Endothelial cell of umbilical vein (primary cell): ENCODE measurements at regions of chr7 and their contacts with region 1.

Region 1: GRCh38 chr7:43582503-43583423 is at the start of gene STK17A:
- DNase-seq: peak; percentile 92
- H3K4me3 ChIP-seq: peak within 1 kb of the TSS; percentile 74 to 89 (median 76)
- H3K27ac ChIP-seq: peak within 1 kb of the TSS; percentile 49
- H3K4me1 ChIP-seq: peaks cover 33% of the 10 kb centered on the region
- H3K27me3 ChIP-seq: peaks cover 2 to 12% of the 10 kb centered on the region in 2 experiments
- CTCF ChIP-seq: peak; percentile 97 to 100
- POLR2A ChIP-seq: peak; percentile 96
- total RNA-seq, gene STK17A: 53.9 and 58.8 TPM in 2 replicates

Region 2: DNA sequence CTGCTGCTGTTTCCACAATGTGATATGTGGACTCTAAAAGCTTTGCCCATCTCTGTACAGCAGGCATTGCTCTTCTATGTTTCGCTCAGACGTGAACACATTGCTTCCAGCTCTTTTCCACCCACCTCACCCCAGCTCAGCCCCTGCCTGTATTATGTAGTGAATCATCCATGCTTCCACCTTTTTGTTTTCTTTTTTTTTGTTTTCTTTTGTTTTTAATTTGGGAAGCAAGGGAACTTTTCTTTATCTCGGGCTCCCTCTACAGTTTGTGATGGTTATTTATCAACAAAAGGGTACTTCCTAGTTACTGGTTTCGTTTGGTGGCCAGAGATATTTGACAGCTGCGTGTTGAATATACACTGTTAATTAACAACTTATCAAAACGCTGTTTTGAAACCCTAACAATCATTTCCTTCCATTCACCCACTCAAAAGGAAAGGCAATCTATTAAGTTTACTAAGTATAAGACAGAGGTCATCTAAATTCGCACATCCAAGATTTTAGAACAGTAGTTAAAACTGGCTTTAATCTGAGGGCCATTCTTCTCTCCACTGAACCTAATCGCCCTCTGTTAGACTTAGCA is 127.7 kb before region 1 on chr7:
- CTCF ChIA-PET with region 1: interaction called, 18 read pairs
- POLR2A ChIA-PET with region 1: interaction called, 5 read pairs
- dilution Hi-C with region 1: no loop called
- intact Hi-C with region 1: no loop called
- DNase-seq: peak; percentile 68
- H3K4me3 ChIP-seq: peak overlapping the region in 1 of 3 experiments; percentile 39
- H3K27ac ChIP-seq: no peak overlapping the region
- H3K4me1 ChIP-seq: peaks cover 3% of the 10 kb centered on the region
- H3K27me3 ChIP-seq: peaks cover 9 to 29% of the 10 kb centered on the region in 2 experiments
- CTCF ChIP-seq: peak; percentile 30 to 50
- POLR2A ChIP-seq: no peak

Region 3: DNA sequence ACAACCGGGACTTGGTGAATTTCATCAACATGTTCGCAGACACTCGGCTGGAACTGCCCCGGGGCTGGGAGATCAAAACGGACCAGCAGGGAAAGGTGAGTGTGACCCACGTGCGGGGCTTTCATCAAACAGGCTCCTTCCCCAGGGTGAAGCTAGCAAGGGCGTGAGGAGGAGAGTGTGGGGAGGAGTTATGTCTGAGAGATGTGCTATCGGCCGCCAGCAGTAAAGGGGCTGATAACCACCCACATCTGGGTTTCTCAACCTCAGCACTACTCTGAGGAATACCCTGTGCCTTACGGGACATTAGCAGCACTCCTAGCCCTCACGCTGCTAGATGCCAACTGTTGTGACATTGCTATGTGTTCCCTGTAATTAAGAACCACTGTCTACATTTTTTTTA is 113.8 kb before region 1 on chr7:
- CTCF ChIA-PET with region 1: no interaction called
- POLR2A ChIA-PET with region 1: no interaction called
- dilution Hi-C with region 1: no loop called
- intact Hi-C with region 1: no loop called
- DNase-seq: no peak
- H3K4me3 ChIP-seq: no peak overlapping the region
- H3K27ac ChIP-seq: no peak overlapping the region
- H3K4me1 ChIP-seq: no peaks in the 10 kb centered on the region
- H3K27me3 ChIP-seq: peaks cover 3 to 6% of the 10 kb centered on the region in 2 experiments
- CTCF ChIP-seq: no peak
- POLR2A ChIP-seq: no peak

Region 4: DNA sequence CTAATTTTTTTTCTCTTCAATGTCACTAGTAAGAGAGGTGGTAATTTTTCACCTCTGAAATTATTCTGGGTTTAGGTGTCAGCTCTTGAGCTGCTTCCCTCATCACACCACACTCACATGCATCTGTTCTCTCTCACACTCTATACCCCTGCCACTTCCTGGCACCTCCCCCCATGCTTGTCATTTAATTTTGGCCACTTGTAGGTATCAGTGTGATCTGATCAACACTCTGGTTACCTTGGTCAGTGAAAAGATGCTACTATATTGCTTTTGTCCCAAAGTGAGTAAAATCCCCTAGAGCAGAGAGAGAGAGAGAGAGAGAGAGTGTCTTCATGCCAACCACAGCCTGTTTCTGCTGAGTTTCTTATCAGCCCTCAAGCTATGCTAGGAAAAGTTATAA is 42.7 kb after region 1 on chr7:
- CTCF ChIA-PET with region 1: interaction called, 28 read pairs
- POLR2A ChIA-PET with region 1: interaction called, 12 read pairs
- dilution Hi-C with region 1: no loop called
- intact Hi-C with region 1: no loop called
- DNase-seq: no peak
- H3K4me3 ChIP-seq: no peak overlapping the region
- H3K27ac ChIP-seq: no peak overlapping the region
- H3K4me1 ChIP-seq: peaks cover 5% of the 10 kb centered on the region
- H3K27me3 ChIP-seq: no peaks in the 10 kb centered on the region
- CTCF ChIP-seq: no peak
- POLR2A ChIP-seq: no peak

Region 5: GRCh38 chr7:43647673-43648472 is 65.1 kb after region 1 on chr7:
- CTCF ChIA-PET with region 1: interaction called, 126 read pairs
- POLR2A ChIA-PET with region 1: interaction called, 50 read pairs
- dilution Hi-C with region 1: no loop called
- intact Hi-C with region 1: loop called (anchors 1 kb)
- DNase-seq: peak; percentile 98
- H3K4me3 ChIP-seq: peak overlapping the region in 1 of 3 experiments; percentile 52
- H3K27ac ChIP-seq: peak overlapping the region; percentile 97
- H3K4me1 ChIP-seq: peaks cover 74% of the 10 kb centered on the region
- H3K27me3 ChIP-seq: no peaks in the 10 kb centered on the region
- CTCF ChIP-seq: no peak
- POLR2A ChIP-seq: no peak

Region 6: DNA sequence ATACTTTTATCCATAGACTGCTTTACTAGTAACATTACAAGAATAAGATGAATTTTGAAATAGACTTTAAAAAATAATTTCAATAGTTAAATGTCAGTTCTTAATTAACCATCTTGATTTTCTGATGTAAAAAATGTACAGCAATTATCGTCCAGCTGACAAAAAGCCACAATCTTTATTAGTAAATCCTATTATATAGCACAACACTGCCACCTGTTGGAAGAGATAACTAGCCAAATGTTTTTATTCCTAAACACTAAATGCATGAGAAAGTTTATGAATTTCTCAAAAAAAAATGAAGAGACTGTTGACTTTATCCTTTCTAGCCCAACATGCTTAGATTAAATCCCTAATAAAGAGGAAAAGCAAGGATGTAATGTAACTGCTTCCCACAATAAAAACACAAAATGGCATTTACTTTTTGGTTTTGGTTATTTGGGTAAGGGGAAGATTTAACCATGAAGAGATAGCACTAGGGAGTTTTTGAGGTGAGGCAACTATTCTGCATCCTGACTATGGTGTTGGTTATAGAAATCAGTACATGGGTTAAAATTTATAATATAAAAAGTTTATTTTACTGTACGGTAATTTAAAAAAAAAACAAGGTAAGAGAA is 138.5 kb after region 1 on chr7:
- CTCF ChIA-PET with region 1: interaction called, 172 read pairs
- POLR2A ChIA-PET with region 1: interaction called, 8 read pairs
- dilution Hi-C with region 1: loop called (anchors 25 kb)
- intact Hi-C with region 1: loop called (anchors 1 kb)
- DNase-seq: peak; percentile 65
- H3K4me3 ChIP-seq: no peak overlapping the region
- H3K27ac ChIP-seq: no peak overlapping the region
- H3K4me1 ChIP-seq: no peaks in the 10 kb centered on the region
- H3K27me3 ChIP-seq: no peaks in the 10 kb centered on the region
- CTCF ChIP-seq: peak; percentile 29 to 49
- POLR2A ChIP-seq: no peak

Region 7: GRCh38 chr7:44587843-44588711 is 1005.3 kb after region 1 on chr7:
- CTCF ChIA-PET with region 1: no interaction called
- POLR2A ChIA-PET with region 1: no interaction called
- dilution Hi-C with region 1: no loop called
- intact Hi-C with region 1: no loop called
- DNase-seq: peak; percentile 81
- H3K4me3 ChIP-seq: no peak overlapping the region
- H3K27ac ChIP-seq: no peak overlapping the region
- H3K4me1 ChIP-seq: no peaks in the 10 kb centered on the region
- H3K27me3 ChIP-seq: no peaks in the 10 kb centered on the region
- CTCF ChIP-seq: peak; percentile 27 to 48
- POLR2A ChIP-seq: no peak